ENCODE measurements at regions of chr3 and their contacts with region 1.

Region 1: DNA sequence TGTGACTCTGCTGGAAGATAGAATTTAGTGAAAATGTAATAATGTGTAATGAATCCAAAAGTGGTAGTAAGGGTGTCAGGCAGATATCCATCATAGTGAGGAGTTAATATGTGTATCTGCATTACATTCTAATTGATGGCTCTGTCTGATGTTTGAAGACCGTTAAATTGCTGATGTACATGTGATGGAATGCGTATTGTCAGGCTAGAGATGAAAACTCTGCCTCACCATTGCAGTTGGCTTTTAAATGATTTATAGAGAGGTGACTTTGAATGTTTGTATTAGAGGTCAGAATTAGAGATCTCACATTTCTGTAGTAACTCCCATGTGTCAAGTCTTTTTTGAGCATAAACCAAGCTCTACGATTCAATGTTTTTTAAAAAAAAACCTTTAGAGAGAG is 234.6 kb downstream of the NAALADL2 start:
- DNase-seq: no peak
- ATAC-seq: no peak
- H3K4me3 ChIP-seq: no peak overlapping the region
- H3K27ac ChIP-seq: no peak overlapping the region
- H3K4me1 ChIP-seq: no peaks in the 10 kb centered on the region
- H3K27me3 ChIP-seq: no peaks in the 10 kb centered on the region
- CTCF ChIP-seq: no peak

Region 2: GRCh38 chr3:174891524-174892203 is 202.1 kb before region 1 on chr3:
- intact Hi-C with region 1: no loop called
- DNase-seq: no peak
- ATAC-seq: no peak
- H3K4me3 ChIP-seq: no peak overlapping the region
- H3K27ac ChIP-seq: no peak overlapping the region
- H3K4me1 ChIP-seq: no peaks in the 10 kb centered on the region
- H3K27me3 ChIP-seq: no peaks in the 10 kb centered on the region
- CTCF ChIP-seq: peak in 3 of 9 donors; percentile 4 to 26 (median 19)

Region 3: DNA sequence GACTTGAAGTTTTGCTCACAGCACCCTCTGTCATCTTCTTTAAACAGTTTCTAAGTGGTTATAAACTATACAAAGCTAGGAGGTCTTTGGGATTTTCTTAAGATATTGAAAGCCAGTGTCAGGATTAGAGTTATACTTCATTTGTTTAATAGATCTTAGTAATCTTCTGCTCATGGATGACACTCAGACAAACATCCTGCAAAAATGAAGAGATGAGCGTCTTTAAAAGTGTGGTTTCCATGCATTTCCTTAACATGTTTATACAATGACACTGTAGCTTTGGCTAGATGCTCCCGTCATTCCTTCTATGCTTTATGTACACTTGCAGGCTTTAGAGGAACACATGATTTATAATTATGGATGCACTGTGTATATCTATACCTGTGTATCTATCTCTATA is 52.4 kb before region 1 on chr3:
- intact Hi-C with region 1: no loop called
- DNase-seq: no peak
- ATAC-seq: no peak
- H3K4me3 ChIP-seq: no peak overlapping the region
- H3K27ac ChIP-seq: no peak overlapping the region
- H3K4me1 ChIP-seq: no peaks in the 10 kb centered on the region
- H3K27me3 ChIP-seq: no peaks in the 10 kb centered on the region
- CTCF ChIP-seq: no peak

Region 4: GRCh38 chr3:175149675-175150074 is 55.9 kb after region 1 on chr3:
- intact Hi-C with region 1: loop called in 1 of 10 experiments (anchors 10 kb)
- DNase-seq: no peak
- ATAC-seq: no peak
- H3K4me3 ChIP-seq: no peak overlapping the region
- H3K27ac ChIP-seq: no peak overlapping the region
- H3K4me1 ChIP-seq: no peaks in the 10 kb centered on the region
- H3K27me3 ChIP-seq: no peaks in the 10 kb centered on the region
- CTCF ChIP-seq: no peak

Measured in heart right ventricle (tissue), 16 donors.